ENCODE measurements at regions of chr11 and their contacts with region 1.

Region 1: DNA sequence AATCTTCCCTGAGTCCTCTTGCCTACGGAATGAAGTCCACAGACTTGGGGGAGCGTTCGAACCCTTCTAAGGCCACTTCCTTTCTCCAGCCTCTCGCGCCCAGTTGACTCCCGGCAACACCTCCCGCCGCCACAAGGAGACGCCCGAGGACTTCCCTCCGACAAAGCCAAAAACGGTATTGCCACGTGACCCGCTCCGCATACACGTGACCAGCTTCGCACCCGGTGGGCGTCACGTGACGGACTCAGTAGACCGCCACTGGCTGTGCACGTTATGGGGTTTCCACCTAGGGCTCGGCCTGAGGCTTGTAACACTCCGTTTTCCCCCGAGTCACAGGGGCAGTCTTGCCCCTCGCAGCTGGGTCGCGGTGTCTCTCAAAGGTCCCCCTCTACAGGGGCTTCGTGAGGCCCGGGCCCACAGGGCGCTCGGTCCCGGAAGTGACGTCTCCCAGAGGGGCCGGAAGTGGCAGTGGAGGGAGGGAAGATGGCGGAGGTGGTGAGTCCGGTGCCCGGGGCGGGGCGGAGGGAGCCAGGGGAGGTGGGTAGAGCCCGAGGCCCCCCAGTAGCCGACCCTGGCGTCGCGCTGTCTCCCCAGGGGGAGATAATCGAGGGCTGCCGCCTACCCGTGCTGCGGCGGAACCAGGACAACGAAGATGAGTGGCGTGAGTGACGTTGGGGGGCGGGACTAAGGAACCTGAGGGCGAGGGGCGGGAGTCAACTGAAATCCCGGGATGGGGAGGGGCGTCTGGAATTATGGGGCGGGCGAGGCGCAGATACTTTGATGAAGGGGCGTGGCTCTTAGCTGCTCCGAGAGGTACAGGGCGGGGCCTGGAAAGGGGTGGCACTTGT is at the start of gene KAT5:
- DNase-seq: peak; percentile 98 to 99 (median 98)
- H3K4me3 ChIP-seq: peak within 1 kb of the TSS; percentile 55
- H3K27ac ChIP-seq: peak within 1 kb of the TSS; percentile 98 to 99
- H3K4me1 ChIP-seq: peaks cover 5% of the 10 kb centered on the region
- H3K27me3 ChIP-seq: no peaks in the 10 kb centered on the region
- CTCF ChIP-seq: peak; percentile 95 to 100 (median 100)
- EP300 ChIP-seq: peak; percentile 29
- POLR2A ChIP-seq: peak; percentile 89
- total RNA-seq, gene KAT5: 64.5 to 110 (median 78.2) TPM

Region 2: DNA sequence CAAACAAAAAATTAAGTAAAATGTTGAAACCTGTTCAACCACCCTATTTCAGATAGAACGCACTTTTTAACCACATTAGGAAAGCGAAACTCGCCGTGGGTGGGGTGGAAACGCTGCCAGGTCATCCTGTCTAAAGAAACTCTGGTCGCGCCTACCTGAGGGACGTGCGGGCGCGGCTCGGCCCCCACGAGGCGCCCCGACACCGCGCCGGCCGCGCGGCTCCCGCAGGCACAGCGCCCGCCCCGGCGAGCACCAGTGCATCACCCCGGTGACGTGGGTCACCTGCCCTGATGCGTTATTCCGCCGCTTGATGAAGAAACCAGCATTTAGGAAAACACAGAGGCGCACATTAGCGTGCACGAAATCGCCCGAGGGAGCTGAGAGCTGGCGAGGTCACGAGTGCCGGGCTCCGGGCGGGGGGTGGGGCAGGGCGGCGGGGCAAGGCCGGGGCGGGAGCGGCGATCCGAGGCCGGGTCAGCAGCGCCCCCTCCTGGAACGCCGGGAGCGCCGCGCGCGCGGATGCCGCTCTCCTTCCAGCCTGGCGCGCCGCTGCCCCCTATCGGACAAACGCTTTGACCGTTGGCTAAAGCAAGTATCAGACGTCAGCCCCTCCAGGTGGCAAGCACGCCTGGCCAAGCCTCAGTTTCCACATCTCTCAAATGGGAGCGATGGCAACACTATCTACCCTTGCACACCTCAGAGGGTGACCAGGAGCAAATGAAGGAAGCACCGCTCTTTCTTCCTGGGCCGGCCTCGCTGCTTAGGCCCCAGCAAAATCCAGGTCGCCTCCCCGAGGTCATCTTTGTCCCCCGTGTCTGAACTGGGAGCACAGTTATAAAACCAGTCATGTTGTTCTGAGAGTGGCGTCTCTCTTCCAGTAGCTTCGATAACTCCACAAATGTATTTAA is 106.1 kb after region 1 on chr11:
- intact Hi-C with region 1: loop called in 3 of 4 experiments (anchors 2 to 10 kb)
- DNase-seq: peak; percentile 92 to 98 (median 97)
- H3K4me3 ChIP-seq: peak overlapping the region; percentile 49
- H3K27ac ChIP-seq: peak overlapping the region in 1 of 2 donors; percentile 72
- H3K4me1 ChIP-seq: peaks cover 2% of the 10 kb centered on the region
- H3K27me3 ChIP-seq: no peaks in the 10 kb centered on the region
- CTCF ChIP-seq: peak; percentile 96 to 97 (median 96)
- EP300 ChIP-seq: no peak
- POLR2A ChIP-seq: no peak

Region 3: GRCh38 chr11:65988791-65989592 is 277.0 kb after region 1 on chr11:
- intact Hi-C with region 1: loop called in 2 of 4 experiments (anchors 5 to 10 kb)
- DNase-seq: peak; percentile 84 to 94 (median 87)
- H3K4me3 ChIP-seq: no peak overlapping the region
- H3K27ac ChIP-seq: no peak overlapping the region
- H3K4me1 ChIP-seq: no peaks in the 10 kb centered on the region
- H3K27me3 ChIP-seq: no peaks in the 10 kb centered on the region
- CTCF ChIP-seq: peak; percentile 67 to 98 (median 96)
- EP300 ChIP-seq: no peak
- POLR2A ChIP-seq: no peak